Endothelial cell of umbilical vein (primary cell): ENCODE measurements at regions of chr3 and their contacts with region 1.

Region 1: GRCh38 chr3:7504886-7505775 is 644.2 kb downstream of the GRM7 start:
- DNase-seq: peak; percentile 99
- H3K4me3 ChIP-seq: no peak overlapping the region
- H3K27ac ChIP-seq: peak overlapping the region; percentile 98
- H3K4me1 ChIP-seq: peaks cover 34% of the 10 kb centered on the region
- H3K27me3 ChIP-seq: no peaks in the 10 kb centered on the region
- CTCF ChIP-seq: peak in 1 of 2 donors; percentile 29
- POLR2A ChIP-seq: no peak

Region 2: DNA sequence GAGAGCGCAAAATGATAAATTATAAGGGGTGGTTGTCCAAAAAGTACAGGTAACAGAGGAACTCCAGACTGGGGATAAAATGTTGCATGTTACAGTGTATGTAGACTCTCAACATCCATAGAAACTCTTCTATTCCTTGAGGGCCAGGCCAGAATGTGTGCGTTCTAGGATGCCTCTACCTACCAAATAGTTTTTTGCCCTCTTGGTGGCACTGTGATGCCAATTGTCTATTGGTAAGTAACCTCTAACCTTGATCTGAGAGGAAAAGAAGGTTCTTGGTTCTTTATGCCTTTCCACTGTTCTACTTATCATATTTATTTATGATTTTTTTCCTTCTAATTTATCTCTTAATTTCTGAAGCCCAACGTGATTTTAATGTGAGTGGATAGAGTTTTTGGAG is 219.6 kb before region 1 on chr3:
- CTCF ChIA-PET with region 1: interaction called, 13 read pairs
- POLR2A ChIA-PET with region 1: interaction called, 3 read pairs
- dilution Hi-C with region 1: no loop called
- intact Hi-C with region 1: loop called (anchors 1 kb)
- DNase-seq: peak; percentile 49
- H3K4me3 ChIP-seq: no peak overlapping the region
- H3K27ac ChIP-seq: no peak overlapping the region
- H3K4me1 ChIP-seq: peaks cover 28% of the 10 kb centered on the region
- H3K27me3 ChIP-seq: no peaks in the 10 kb centered on the region
- CTCF ChIP-seq: peak in 1 of 2 donors; percentile 14
- POLR2A ChIP-seq: no peak

Region 3: DNA sequence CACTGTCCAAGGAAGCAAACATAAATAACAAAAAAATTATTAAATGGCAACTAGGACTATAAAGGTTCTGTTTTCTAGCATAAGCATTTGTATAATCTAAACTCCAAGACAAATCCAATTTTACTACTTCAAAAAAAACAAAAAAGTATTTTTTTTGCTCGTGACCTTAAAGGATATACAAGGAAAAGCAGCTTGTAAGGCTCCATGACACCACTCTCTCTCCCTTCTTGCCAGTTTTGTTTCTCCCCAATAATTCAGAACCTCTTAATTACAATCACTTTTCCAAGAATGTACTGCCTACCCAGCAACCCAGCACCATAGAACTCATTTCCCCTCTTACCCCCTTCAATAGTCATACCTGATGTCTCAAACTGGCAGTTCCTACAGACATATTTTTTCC is 148.0 kb before region 1 on chr3:
- CTCF ChIA-PET with region 1: no interaction called
- POLR2A ChIA-PET with region 1: no interaction called
- dilution Hi-C with region 1: no loop called
- intact Hi-C with region 1: no loop called
- DNase-seq: no peak
- H3K4me3 ChIP-seq: no peak overlapping the region
- H3K27ac ChIP-seq: no peak overlapping the region
- H3K4me1 ChIP-seq: no peaks in the 10 kb centered on the region
- H3K27me3 ChIP-seq: no peaks in the 10 kb centered on the region
- CTCF ChIP-seq: no peak
- POLR2A ChIP-seq: no peak

Region 4: GRCh38 chr3:7382293-7383010 is 122.7 kb before region 1 on chr3:
- CTCF ChIA-PET with region 1: no interaction called
- POLR2A ChIA-PET with region 1: no interaction called
- dilution Hi-C with region 1: no loop called
- intact Hi-C with region 1: loop called (anchors 2 kb)
- DNase-seq: peak; percentile 98
- H3K4me3 ChIP-seq: no peak overlapping the region
- H3K27ac ChIP-seq: peak overlapping the region; percentile 57
- H3K4me1 ChIP-seq: peaks cover 18% of the 10 kb centered on the region
- H3K27me3 ChIP-seq: no peaks in the 10 kb centered on the region
- CTCF ChIP-seq: no peak
- POLR2A ChIP-seq: no peak

Region 5: GRCh38 chr3:7469866-7470265 is 35.3 kb before region 1 on chr3:
- CTCF ChIA-PET with region 1: no interaction called
- POLR2A ChIA-PET with region 1: no interaction called
- dilution Hi-C with region 1: no loop called
- intact Hi-C with region 1: no loop called
- DNase-seq: no peak
- H3K4me3 ChIP-seq: no peak overlapping the region
- H3K27ac ChIP-seq: no peak overlapping the region
- H3K4me1 ChIP-seq: no peaks in the 10 kb centered on the region
- H3K27me3 ChIP-seq: no peaks in the 10 kb centered on the region
- CTCF ChIP-seq: no peak
- POLR2A ChIP-seq: no peak

Region 6: GRCh38 chr3:7518456-7518855 is 13.3 kb after region 1 on chr3:
- CTCF ChIA-PET with region 1: interaction called, 10 read pairs
- POLR2A ChIA-PET with region 1: no interaction called
- dilution Hi-C with region 1: no loop called
- intact Hi-C with region 1: no loop called
- DNase-seq: peak; percentile 59
- H3K4me3 ChIP-seq: no peak overlapping the region
- H3K27ac ChIP-seq: no peak overlapping the region
- H3K4me1 ChIP-seq: no peaks in the 10 kb centered on the region
- H3K27me3 ChIP-seq: no peaks in the 10 kb centered on the region
- CTCF ChIP-seq: no peak
- POLR2A ChIP-seq: no peak

Region 7: DNA sequence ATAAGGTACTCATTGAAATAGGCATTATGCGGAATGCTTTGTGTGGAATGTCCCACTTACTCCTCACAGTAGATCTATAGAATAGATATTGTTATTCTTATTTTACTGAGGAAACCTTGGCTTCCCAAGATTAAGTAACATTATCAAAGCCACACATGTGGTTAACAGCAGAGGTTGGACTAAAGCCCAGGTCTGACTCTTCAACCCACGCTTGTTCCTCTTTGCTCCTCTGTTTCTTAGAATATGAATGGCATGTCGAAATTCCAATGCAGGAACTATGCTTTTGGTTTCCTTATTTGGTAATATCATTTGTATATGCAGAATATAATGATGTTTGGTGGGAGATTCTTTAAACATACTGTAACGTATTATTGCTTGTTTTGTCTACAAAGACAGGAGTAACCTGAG is 177.7 kb after region 1 on chr3:
- CTCF ChIA-PET with region 1: interaction called, 8 read pairs
- POLR2A ChIA-PET with region 1: interaction called, 4 read pairs
- dilution Hi-C with region 1: no loop called
- intact Hi-C with region 1: loop called (anchors 1 kb)
- DNase-seq: peak; percentile 97
- H3K4me3 ChIP-seq: no peak overlapping the region
- H3K27ac ChIP-seq: peak overlapping the region; percentile 67
- H3K4me1 ChIP-seq: peaks cover 21% of the 10 kb centered on the region
- H3K27me3 ChIP-seq: no peaks in the 10 kb centered on the region
- CTCF ChIP-seq: no peak
- POLR2A ChIP-seq: no peak

Region 8: DNA sequence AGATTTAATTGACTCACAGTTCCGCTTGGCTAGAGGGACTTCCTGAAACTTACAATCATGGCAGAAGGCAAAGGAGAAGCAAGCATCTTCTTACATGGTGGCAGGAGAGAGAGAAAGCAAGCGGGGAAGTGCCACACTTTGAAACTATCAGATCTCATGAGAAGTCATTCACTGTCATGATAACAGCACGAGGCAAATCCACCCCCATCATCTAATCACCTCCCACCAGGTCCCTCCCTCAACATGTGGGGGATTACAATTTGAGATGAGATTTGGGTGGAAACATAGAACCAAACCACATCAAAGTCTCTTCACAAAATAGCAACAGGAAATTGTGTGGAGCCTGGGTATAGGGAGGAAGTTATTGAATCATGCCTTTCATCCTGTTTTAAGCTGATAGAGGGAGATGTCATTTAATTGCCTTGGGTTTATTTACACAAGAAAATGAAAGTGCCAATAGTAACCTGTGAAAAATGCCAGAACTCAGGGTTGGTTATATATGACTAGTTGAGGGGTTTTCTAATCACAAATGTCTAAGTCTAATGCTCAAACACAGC is 371.7 kb after region 1 on chr3:
- CTCF ChIA-PET with region 1: no interaction called
- POLR2A ChIA-PET with region 1: no interaction called
- dilution Hi-C with region 1: no loop called
- intact Hi-C with region 1: loop called (anchors 1 kb)
- DNase-seq: peak; percentile 92
- H3K4me3 ChIP-seq: peak overlapping the region in 1 of 3 experiments; percentile 1
- H3K27ac ChIP-seq: peak overlapping the region; percentile 76
- H3K4me1 ChIP-seq: peaks cover 40% of the 10 kb centered on the region
- H3K27me3 ChIP-seq: no peaks in the 10 kb centered on the region
- CTCF ChIP-seq: no peak
- POLR2A ChIP-seq: peak; percentile 41